Left cardiac atrium (tissue), 4 donors: ENCODE measurements at regions of chr3 and their contacts with region 1.

Region 1: GRCh38 chr3:65575373-65575840 is 463.3 kb downstream of the MAGI1 start:
- DNase-seq: no peak
- ATAC-seq: no peak

Region 2: DNA sequence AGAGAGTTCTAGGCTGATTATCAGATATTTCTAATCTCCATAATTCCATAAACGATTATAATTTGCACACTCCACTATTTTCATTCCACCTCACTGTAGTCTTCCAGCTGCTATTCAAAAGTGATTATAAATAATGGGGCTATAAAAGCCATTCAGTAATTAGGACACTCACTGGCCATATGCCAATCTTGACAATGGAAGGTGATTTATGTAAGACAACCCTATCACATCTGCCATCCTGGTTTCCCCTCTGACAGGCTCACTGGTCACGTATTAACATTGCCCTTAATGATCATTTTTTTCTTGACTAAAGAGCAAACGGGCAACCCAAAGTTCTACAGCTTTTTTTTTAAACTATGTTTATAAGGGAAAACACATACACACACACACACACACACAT is 60.9 kb after region 1 on chr3:
- intact Hi-C with region 1: loop called in 1 of 2 experiments (anchors 10 kb)
- DNase-seq: no peak
- ATAC-seq: no peak